ENCODE measurements at regions of chr9 and their contacts with region 1.

Region 1: DNA sequence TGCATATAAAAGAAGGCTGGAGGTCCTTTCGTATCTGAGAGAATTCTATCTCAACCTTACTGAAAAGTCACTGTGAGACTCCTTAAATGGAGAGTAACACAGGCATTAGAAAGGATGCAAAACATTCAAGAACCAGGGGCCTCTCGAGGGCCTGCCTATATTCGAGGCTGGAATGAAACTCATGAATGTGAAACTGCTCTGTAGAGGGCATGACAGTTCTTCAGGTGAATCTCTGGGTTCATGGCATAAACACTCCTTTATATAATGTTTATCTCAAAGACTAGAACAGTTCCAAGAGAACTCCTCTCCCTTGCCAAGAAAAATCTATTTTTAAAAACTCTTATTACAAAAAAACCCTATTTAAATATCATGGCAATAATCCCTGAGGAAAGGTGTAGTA is 113.9 kb downstream of the SEC61B start:
- DNase-seq: peak; percentile 31
- H3K4me3 ChIP-seq: no peak overlapping the region
- H3K27ac ChIP-seq: peak overlapping the region in 1 of 4 donors; percentile 33
- H3K4me1 ChIP-seq: peaks cover 0 to 13% (median 11%) of the 10 kb centered on the region in 4 donors
- H3K27me3 ChIP-seq: no peaks in the 10 kb centered on the region
- CTCF ChIP-seq: peak in 1 of 3 experiments; percentile 16
- EP300 ChIP-seq: no peak
- POLR2A ChIP-seq: no peak

Region 2: DNA sequence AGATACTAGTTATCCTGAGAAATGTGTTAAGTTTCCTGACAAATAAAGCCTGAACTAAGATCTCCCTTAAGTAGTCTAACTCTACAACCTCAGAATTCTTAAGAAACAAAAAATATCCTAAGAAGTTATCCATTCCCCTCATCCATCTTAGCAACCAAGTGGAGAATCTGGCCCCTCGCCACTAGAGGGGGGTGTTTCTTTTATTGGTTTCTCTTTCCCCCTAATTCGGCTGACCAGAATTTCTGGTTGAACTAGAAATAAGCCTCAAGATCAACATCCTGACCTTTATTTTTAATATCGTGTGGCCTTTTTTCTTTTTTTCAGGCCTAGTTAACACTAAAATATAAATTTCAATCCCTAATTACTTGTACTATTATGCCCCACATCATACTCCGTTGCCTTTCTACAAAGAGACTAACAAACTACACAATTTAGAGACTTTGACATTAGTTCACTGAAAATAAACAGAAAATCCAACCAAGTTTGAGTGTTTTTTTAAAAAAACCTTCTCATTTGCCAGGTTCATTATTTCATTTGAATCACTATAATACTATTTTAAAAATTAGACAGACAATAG is 471.4 kb after region 1 on chr9:
- intact Hi-C with region 1: loop called (anchors 10 kb)
- DNase-seq: peak; percentile 94
- H3K4me3 ChIP-seq: no peak overlapping the region
- H3K27ac ChIP-seq: no peak overlapping the region
- H3K4me1 ChIP-seq: peaks cover 0 to 5% (median 1%) of the 10 kb centered on the region in 4 donors
- H3K27me3 ChIP-seq: no peaks in the 10 kb centered on the region
- CTCF ChIP-seq: peak; percentile 74 to 77 (median 75)
- EP300 ChIP-seq: no peak
- POLR2A ChIP-seq: no peak